OCI-LY7 (cell line): ENCODE measurements at regions of chr10 and their contacts with region 1.

Region 1: DNA sequence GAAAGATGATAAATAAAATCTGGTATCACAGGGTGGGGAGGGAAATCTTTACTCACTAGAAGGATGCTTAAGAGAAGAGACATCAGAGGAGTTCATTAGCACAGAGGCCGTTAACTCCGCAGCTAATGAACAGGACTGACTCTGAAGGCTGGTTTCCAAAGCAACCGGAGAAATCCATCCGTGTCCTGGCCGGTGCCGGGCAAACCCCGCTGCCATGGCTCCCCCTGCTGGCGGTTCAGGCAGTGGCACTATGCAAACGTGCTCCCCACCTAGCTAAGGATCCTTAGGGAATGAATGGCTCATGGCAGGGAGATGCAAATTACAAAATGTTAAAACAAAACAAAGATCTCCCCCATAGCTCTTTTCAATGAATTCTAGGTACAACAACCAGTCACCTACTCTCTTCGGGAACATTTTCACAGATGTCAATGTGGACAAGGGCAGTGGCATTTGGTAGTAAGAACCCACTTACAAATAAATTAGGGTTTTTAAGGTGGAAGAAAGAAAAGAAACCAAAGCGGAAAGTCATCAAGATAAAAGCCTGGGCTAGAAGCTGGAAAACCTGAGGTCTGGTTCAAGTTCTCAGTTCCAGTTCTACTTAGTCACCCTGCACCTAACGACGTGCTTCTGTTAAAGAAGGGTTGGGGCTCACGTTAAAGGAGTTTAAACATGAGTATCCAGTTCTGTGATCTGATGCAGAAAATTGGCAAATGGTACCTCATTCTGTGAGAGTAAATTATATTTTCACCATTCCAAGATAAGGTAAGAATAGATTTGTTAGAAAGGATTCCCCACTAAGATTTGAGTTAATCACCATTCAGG is 138.2 kb downstream of the SVIL start:
- DNase-seq: peak; percentile 76
- H3K4me3 ChIP-seq: no peak overlapping the region
- H3K27ac ChIP-seq: no peak overlapping the region
- H3K4me1 ChIP-seq: no peaks in the 10 kb centered on the region
- CTCF ChIP-seq: peak; percentile 98

Region 2: GRCh38 chr10:29386342-29386999 is 110.1 kb before region 1 on chr10:
- CTCF ChIA-PET with region 1: no interaction called
- POLR2A ChIA-PET with region 1: no interaction called
- intact Hi-C with region 1: loop called (anchors 5 kb)
- DNase-seq: peak; percentile 35
- H3K4me3 ChIP-seq: no peak overlapping the region
- H3K27ac ChIP-seq: no peak overlapping the region
- H3K4me1 ChIP-seq: no peaks in the 10 kb centered on the region
- CTCF ChIP-seq: peak; percentile 86

Region 3: DNA sequence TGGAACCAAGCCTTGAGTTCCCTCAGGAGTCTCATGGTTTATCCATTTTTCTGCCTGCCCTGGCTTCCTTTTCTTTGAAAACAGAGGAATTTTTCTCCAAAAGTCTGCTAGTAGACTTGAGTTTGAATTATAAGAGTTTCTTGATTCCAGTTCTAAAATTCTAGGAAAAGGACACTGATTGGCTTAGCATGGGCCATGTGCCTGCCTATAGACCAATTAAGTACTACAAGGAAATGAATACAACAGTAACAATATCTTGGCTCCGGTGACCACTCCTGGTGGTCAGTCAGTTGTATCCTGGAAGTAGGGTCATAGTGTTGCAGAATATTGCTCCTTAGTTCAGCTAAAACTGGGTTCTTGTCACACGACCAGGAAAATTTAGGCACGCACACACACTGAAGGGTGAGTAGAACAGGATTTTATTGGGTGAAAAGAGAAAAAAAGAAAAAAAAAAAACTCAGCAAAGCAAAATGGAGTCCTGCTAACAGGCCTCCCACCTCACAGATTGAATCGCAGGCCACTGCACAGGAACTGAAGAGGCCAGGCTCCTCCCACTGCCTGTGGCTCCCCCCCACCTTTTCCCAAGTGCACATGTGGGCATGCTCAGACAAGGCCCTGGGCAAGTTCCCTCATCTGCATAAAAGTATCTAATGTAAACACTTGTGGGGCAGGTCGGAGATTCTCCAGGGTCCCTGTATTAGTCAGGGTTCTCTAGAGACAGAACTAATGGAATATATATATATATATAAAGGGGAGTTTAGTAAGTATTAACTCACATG is 52.6 kb before region 1 on chr10:
- CTCF ChIA-PET with region 1: interaction called, 5 read pairs
- POLR2A ChIA-PET with region 1: interaction called, 3 read pairs
- intact Hi-C with region 1: loop called (anchors 1 kb)
- DNase-seq: no peak
- H3K4me3 ChIP-seq: no peak overlapping the region
- H3K27ac ChIP-seq: no peak overlapping the region
- H3K4me1 ChIP-seq: no peaks in the 10 kb centered on the region
- CTCF ChIP-seq: no peak

Region 4: DNA sequence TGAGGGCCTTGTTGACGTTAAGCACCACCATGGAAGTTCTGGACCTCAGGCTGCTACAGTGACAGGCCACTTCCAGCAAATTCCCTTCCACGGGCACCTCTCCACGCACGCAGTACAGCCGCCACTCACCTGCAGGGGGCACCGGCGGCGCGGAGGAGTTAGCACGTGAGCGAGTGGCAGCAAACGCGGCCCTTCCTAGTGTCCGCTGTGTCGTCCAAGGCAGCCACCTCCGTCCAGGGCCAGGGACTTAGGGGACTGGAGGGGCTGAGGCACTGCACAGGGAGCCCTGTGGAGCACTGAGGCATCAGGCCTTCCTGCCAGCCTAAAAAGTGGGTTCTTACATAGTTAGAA is 26.2 kb before region 1 on chr10:
- CTCF ChIA-PET with region 1: no interaction called
- POLR2A ChIA-PET with region 1: no interaction called
- intact Hi-C with region 1: loop called (anchors 1 kb)
- DNase-seq: peak; percentile 47
- H3K4me3 ChIP-seq: no peak overlapping the region
- H3K27ac ChIP-seq: no peak overlapping the region
- H3K4me1 ChIP-seq: peaks cover 11% of the 10 kb centered on the region
- CTCF ChIP-seq: peak; percentile 88